ENCODE measurements at regions of chr10 and their contacts with region 1.

Region 1: GRCh38 chr10:89079961-89080360 is 89.4 kb downstream of the FAS start:
- DNase-seq: no peak
- H3K4me3 ChIP-seq: no peak overlapping the region
- H3K27ac ChIP-seq: no peak overlapping the region
- H3K4me1 ChIP-seq: peaks cover 3% of the 10 kb centered on the region
- H3K27me3 ChIP-seq: no peaks in the 10 kb centered on the region
- CTCF ChIP-seq: no peak

Region 2: DNA sequence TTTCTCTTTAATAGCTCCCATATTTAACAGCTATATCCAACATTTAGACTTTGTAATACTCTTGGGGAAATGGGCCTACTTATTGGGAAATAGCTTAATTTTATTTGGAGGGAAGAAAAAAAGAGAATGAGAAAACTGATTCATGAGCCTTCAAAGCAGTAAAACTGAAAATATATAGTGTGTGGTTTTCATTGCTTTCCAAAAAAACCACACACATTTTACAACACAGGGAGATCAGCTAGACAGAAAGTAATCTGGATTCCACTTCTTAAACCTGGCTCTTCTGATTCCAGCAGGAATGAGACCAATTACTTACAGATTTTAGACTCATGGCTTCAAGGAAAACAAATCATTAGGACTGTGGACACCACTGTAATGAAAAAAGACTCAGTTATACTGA is 78.5 kb after region 1 on chr10:
- CTCF ChIA-PET with region 1: no interaction called
- dilution Hi-C with region 1: no loop called
- in situ Hi-C with region 1: no loop called
- intact Hi-C with region 1: loop called (anchors 5 kb)
- DNase-seq: peak; percentile 49
- H3K4me3 ChIP-seq: no peak overlapping the region
- H3K27ac ChIP-seq: no peak overlapping the region
- H3K4me1 ChIP-seq: peaks cover 4% of the 10 kb centered on the region
- H3K27me3 ChIP-seq: no peaks in the 10 kb centered on the region
- CTCF ChIP-seq: no peak

Region 3: GRCh38 chr10:89262086-89263051 is 182.4 kb after region 1 on chr10:
- CTCF ChIA-PET with region 1: no interaction called
- dilution Hi-C with region 1: no loop called
- in situ Hi-C with region 1: no loop called
- intact Hi-C with region 1: no loop called
- DNase-seq: peak; percentile 35
- H3K4me3 ChIP-seq: no peak overlapping the region
- H3K27ac ChIP-seq: no peak overlapping the region
- H3K4me1 ChIP-seq: peaks cover 27% of the 10 kb centered on the region
- H3K27me3 ChIP-seq: no peaks in the 10 kb centered on the region
- CTCF ChIP-seq: no peak